Spleen (tissue), 13 donors: ENCODE measurements at regions of chr1 and their contacts with region 1.

Region 1: GRCh38 chr1:109730666-109731065 is 10.2 kb downstream of the GSTM3 start:
- DNase-seq: no peak
- H3K4me3 ChIP-seq: no peak overlapping the region
- H3K27ac ChIP-seq: no peak overlapping the region
- H3K4me1 ChIP-seq: no peaks in the 10 kb centered on the region
- H3K27me3 ChIP-seq: no peaks in the 10 kb centered on the region
- CTCF ChIP-seq: no peak
- POLR2A ChIP-seq: no peak

Region 2: DNA sequence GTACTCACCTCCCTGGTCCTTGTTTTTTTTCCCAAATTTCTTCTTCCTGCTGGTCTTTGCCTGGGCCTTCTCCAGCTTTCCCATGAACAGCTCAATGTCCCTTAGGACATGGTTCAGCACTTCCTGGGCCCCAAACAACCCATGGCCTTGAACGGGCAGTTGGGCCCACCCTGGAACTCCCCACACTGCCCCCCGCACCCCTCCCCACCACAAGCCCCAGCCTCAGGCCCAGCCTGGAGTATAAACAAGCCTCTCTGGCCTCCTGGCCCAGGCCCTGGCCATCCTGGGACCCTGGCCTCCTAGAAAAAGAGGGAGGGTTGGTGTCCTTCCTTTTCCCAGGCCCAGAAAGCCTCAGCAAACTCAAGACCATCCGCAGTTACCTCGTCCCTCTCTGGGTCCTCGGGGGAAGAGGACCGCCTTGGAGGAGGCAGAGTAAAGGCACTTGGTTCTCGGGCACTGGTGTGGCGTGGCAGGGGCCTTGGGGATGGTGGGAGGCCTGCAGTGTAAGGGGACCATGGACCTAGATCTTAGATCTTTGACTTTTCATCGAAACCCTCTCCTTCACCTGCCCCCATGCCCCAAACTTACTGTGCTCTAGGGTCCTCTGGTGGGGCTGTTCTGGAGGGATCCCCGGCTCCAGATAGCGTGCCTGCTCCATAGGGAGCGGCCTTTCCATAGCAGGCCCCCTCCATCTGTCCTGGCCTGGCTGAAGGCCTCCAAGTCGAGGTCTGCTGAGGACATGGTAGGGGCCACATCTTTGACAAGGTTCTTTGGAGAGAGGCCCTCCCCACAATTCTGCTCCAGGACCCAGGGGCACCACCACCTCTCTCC is 27.5 kb after region 1 on chr1:
- intact Hi-C with region 1: loop called (anchors 2 kb)
- DNase-seq: peak; percentile 45
- H3K4me3 ChIP-seq: no peak overlapping the region
- H3K27ac ChIP-seq: no peak overlapping the region
- H3K4me1 ChIP-seq: peaks cover 0 to 6% (median 2%) of the 10 kb centered on the region in 6 donors
- H3K27me3 ChIP-seq: no peaks in the 10 kb centered on the region
- CTCF ChIP-seq: no peak
- POLR2A ChIP-seq: no peak